Endothelial cell of umbilical vein (primary cell): ENCODE measurements at regions of chr16 and their contacts with region 1.

Region 1: DNA sequence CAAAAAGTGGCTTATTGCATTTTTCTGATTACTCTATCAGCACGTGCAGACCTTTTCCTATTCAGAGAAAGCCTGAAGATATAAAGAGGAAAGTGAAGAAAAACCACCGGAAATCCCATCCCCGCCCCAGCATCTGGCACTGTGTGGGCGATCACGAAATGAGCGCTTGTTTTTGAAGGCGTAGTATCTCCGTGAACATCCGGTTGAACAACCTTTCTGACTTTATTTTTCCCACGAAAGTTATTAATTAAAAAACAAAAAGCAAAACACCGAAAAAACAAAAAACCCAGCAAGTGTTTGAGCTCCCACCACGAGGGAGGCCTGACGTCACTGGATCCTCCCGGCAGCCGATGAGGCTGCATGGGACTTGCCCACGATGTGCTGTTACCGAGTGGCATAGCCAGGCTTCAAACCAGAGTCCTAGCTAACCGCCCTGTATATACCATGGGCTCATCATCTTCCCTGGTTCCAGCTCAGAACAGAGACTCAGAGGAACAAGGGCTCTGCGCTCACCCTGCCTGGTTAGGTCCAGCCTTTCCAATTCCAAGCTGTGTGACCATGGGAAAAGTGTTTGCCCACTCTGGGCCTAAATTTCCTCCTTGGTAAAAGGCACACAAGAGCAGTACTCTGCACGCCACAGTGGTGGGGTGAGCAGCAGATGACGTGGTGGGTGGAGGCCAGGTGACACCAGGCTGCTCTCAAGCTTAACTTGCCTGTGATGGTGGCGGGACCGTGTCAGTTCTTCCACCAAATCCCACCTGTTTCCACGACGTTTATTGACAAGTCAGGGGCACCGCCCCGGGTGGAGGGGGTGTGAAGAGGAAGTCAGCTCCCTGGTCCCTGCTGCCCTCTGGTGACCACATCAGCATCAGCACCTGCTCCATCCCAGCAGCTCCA is 34.3 kb upstream of the IL21R start:
- DNase-seq: peak; percentile 82
- H3K4me3 ChIP-seq: peak overlapping the region in 1 of 3 experiments; percentile 3
- H3K27ac ChIP-seq: peak overlapping the region; percentile 87
- H3K4me1 ChIP-seq: peaks cover 19% of the 10 kb centered on the region
- H3K27me3 ChIP-seq: no peaks in the 10 kb centered on the region
- CTCF ChIP-seq: peak; percentile 64 to 93
- POLR2A ChIP-seq: peak; percentile 49

Region 2: DNA sequence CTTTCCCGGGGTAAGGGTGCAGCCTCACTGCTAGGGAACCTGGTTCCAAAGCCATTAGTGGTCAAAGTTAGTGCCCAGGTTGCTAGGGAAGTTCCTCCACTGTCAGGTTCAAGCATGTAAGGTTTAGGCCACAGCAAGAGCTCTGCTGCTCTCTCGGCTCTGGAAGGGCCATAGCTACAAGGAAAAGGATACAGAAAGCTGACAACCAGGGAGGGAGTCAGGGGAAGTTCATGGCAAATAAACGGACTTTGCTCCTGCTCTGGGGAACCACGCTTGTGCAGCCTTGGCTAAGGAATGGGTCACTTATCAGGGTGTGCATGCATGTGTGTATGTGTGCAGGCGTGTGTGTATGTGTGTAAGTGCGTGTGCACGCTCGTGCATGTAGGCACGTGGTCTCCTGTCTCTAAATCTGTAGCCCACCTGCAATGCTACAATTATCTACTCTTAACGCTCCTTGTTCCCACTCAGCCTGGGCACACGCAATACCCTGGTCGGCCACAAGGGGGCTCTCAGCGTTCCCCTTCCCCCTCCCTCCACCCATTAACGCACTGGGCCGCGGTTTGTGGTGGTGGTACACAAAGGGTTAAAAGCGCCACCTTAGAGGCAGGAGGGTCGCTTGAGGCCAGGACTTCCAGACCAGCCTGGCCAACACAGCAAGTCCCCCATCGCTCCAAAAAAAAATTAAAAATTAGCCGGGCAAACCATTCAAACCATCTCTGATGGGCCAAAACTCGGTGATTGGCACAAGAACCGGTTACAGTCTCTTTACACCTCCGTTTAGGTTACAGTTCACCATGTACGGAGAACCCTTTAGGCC is 212.8 kb before region 1 on chr16:
- CTCF ChIA-PET with region 1: interaction called, 49 read pairs
- POLR2A ChIA-PET with region 1: no interaction called
- dilution Hi-C with region 1: no loop called
- intact Hi-C with region 1: loop called (anchors 1 kb)
- DNase-seq: peak; percentile 38
- H3K4me3 ChIP-seq: no peak overlapping the region
- H3K27ac ChIP-seq: no peak overlapping the region
- H3K4me1 ChIP-seq: no peaks in the 10 kb centered on the region
- H3K27me3 ChIP-seq: no peaks in the 10 kb centered on the region
- CTCF ChIP-seq: peak; percentile 94 to 96
- POLR2A ChIP-seq: no peak

Region 3: DNA sequence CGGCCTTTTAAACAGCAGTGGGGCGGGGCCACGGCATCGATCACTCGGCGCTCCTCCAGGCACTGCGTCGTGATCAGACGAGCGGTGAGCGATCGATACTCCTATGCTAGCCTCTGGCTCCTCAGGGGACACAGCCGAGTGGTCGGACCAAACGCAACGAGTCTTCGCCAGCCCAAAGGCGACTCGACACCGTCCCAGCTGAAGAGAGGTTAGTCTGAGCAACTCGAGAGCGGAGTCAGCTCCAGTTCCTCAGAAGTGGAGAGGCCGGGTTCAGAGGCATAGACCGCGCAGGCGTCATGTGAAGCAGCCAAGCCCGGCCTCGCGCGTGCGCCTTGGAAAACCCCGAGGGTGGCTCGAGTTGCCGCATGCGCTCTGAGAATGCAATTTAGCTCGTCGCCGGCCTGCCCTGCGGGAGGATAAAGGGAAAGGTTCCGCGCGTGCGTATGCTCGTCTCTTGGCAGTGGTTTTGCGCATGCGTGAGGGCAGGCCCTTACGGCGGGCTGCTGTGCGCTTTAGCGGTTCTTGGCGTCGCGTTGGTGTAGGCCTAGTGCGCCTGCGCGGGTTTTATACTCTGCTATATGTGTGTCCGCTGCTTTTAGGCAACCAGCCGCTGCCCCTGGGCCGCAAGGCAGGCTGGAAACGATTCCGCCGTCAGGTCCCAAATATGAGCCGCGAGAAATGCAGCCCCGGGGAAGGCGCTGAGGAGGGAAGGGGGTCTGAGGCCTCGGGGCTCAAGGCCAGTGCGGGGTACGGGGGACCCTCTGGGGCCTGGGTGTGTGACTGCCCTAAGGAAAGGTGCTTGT is 164.1 kb before region 1 on chr16 and contains the start of gene KDM8:
- CTCF ChIA-PET with region 1: interaction called, 11 read pairs
- POLR2A ChIA-PET with region 1: interaction called, 3 read pairs
- dilution Hi-C with region 1: no loop called
- intact Hi-C with region 1: loop called (anchors 1 kb)
- DNase-seq: peak; percentile 100
- H3K4me3 ChIP-seq: peak within 1 kb of the TSS; percentile 19 to 78 (median 59)
- H3K27ac ChIP-seq: peak within 1 kb of the TSS; percentile 78
- H3K4me1 ChIP-seq: peaks cover 10% of the 10 kb centered on the region
- H3K27me3 ChIP-seq: peaks cover 2 to 6% of the 10 kb centered on the region in 2 experiments
- CTCF ChIP-seq: no peak
- POLR2A ChIP-seq: peak; percentile 90
- total RNA-seq, gene KDM8: 8.4 and 8.9 TPM in 2 replicates

Region 4: DNA sequence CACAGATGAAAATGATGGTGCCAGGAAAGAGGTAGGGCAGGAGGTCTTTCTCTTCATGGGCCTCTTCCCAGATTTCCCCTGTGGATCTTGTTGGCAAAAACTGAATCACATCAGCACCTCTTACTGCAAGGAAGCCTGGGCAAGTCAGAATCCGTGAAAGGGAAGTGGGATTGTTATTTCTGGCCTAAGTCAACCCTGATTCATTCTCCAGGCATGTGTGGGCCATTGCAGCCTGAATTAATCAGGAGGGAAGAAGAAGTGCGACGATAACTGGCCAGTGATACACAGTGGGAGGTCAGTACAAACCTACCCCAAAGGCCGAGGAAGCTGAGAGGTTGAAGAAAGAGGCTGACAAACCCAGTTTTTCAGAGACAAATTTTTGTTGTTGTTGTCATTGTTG is 81.3 kb before region 1 on chr16:
- CTCF ChIA-PET with region 1: no interaction called
- POLR2A ChIA-PET with region 1: no interaction called
- dilution Hi-C with region 1: no loop called
- intact Hi-C with region 1: loop called (anchors 1 kb)
- DNase-seq: peak; percentile 98
- H3K4me3 ChIP-seq: no peak overlapping the region
- H3K27ac ChIP-seq: peak overlapping the region; percentile 86
- H3K4me1 ChIP-seq: peaks cover 15% of the 10 kb centered on the region
- H3K27me3 ChIP-seq: no peaks in the 10 kb centered on the region
- CTCF ChIP-seq: no peak
- POLR2A ChIP-seq: peak; percentile 50

Region 5: GRCh38 chr16:27326738-27327585 is 40.7 kb before region 1 on chr16:
- CTCF ChIA-PET with region 1: interaction called, 6 read pairs
- POLR2A ChIA-PET with region 1: no interaction called
- dilution Hi-C with region 1: no loop called
- intact Hi-C with region 1: loop called (anchors 5 kb)
- DNase-seq: peak; percentile 78
- H3K4me3 ChIP-seq: no peak overlapping the region
- H3K27ac ChIP-seq: peak overlapping the region; percentile 91
- H3K4me1 ChIP-seq: peaks cover 37% of the 10 kb centered on the region
- H3K27me3 ChIP-seq: no peaks in the 10 kb centered on the region
- CTCF ChIP-seq: peak in 1 of 2 donors; percentile 3
- POLR2A ChIP-seq: peak; percentile 34

Region 6: DNA sequence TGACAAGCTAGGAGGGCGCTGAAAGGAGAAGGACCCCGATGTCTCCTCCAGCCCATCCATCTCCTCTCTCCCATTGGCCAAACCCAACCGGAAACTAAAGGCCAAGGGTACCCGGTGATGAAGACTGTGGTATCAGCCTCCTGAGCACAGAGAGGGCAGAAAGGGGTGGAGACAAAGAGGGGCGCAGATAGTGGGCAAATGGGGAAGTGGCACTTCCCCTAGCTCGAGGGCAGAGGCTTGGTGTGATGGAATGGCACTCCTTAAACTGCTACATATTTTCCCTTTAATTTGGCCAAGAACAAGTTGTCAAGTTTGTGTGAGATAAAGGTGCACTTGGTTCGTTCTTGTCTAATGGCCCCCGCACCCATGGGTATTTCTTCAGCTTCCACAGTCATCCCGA is 26.2 kb before region 1 on chr16:
- CTCF ChIA-PET with region 1: no interaction called
- POLR2A ChIA-PET with region 1: no interaction called
- dilution Hi-C with region 1: no loop called
- intact Hi-C with region 1: no loop called
- DNase-seq: no peak
- H3K4me3 ChIP-seq: no peak overlapping the region
- H3K27ac ChIP-seq: no peak overlapping the region
- H3K4me1 ChIP-seq: no peaks in the 10 kb centered on the region
- H3K27me3 ChIP-seq: no peaks in the 10 kb centered on the region
- CTCF ChIP-seq: no peak
- POLR2A ChIP-seq: no peak

Region 7: GRCh38 chr16:27377666-27378485 is 10.2 kb after region 1 on chr16:
- CTCF ChIA-PET with region 1: no interaction called
- POLR2A ChIA-PET with region 1: no interaction called
- dilution Hi-C with region 1: no loop called
- intact Hi-C with region 1: no loop called
- DNase-seq: no peak
- H3K4me3 ChIP-seq: no peak overlapping the region
- H3K27ac ChIP-seq: no peak overlapping the region
- H3K4me1 ChIP-seq: no peaks in the 10 kb centered on the region
- H3K27me3 ChIP-seq: no peaks in the 10 kb centered on the region
- CTCF ChIP-seq: no peak
- POLR2A ChIP-seq: no peak